ENCODE measurements at regions of chr22 and their contacts with region 1.

Region 1: GRCh38 chr22:31211862-31212730 is at the start of gene LIMK2:
- DNase-seq: peak; percentile 88
- H3K4me3 ChIP-seq: peak within 1 kb of the TSS; percentile 70 to 96 (median 92)
- H3K27ac ChIP-seq: peak within 1 kb of the TSS; percentile 61
- H3K4me1 ChIP-seq: peaks cover 14% of the 10 kb centered on the region
- H3K27me3 ChIP-seq: no peaks in the 10 kb centered on the region
- CTCF ChIP-seq: peak; percentile 57 to 83
- total RNA-seq, gene LIMK2: 176 to 484 TPM

Region 2: GRCh38 chr22:30763815-30764686 is 448.0 kb before region 1 on chr22:
- CTCF ChIA-PET with region 1: no interaction called
- dilution Hi-C with region 1: no loop called
- in situ Hi-C with region 1: no loop called
- intact Hi-C with region 1: no loop called
- DNase-seq: peak; percentile 83
- H3K4me3 ChIP-seq: no peak overlapping the region
- H3K27ac ChIP-seq: peak overlapping the region; percentile 6
- H3K4me1 ChIP-seq: peaks cover 3% of the 10 kb centered on the region
- H3K27me3 ChIP-seq: no peaks in the 10 kb centered on the region
- CTCF ChIP-seq: peak; percentile 59 to 77

Region 3: GRCh38 chr22:31107178-31107893 is 104.8 kb before region 1 on chr22 and contains the start of gene SELENOM:
- CTCF ChIA-PET with region 1: interaction called, 5 read pairs
- dilution Hi-C with region 1: no loop called
- in situ Hi-C with region 1: no loop called
- intact Hi-C with region 1: loop called (anchors 5 kb)
- DNase-seq: peak; percentile 98
- H3K4me3 ChIP-seq: peak within 1 kb of the TSS; percentile 66 to 77 (median 67)
- H3K27ac ChIP-seq: peak within 1 kb of the TSS; percentile 82
- H3K4me1 ChIP-seq: peaks cover 7% of the 10 kb centered on the region
- H3K27me3 ChIP-seq: no peaks in the 10 kb centered on the region
- CTCF ChIP-seq: peak; percentile 74 to 97
- total RNA-seq, gene SELENOM: 24.6 to 38.7 TPM

Region 4: DNA sequence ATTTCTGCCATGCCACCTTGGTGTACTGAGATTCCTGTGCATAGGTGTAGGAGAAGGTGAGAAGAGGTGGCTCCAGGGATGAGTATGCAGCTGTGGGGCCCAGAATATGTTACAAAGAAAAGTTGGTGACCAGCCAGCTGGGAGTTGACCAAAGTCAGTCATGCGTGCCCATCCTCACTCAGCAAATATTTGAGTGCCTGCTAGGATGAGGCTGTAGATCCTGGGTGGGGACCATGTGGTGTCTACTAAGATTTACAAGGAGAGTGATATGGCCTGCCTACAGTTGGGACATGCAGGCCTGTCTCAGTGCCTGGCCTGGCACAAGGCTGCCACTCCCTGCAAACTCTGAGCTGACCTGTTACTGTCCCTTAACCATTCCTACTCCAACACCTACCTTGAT is 32.7 kb before region 1 on chr22:
- CTCF ChIA-PET with region 1: no interaction called
- dilution Hi-C with region 1: no loop called
- in situ Hi-C with region 1: no loop called
- intact Hi-C with region 1: loop called (anchors 2 kb)
- DNase-seq: peak; percentile 67
- H3K4me3 ChIP-seq: no peak overlapping the region
- H3K27ac ChIP-seq: peak overlapping the region; percentile 1
- H3K4me1 ChIP-seq: peaks cover 35% of the 10 kb centered on the region
- H3K27me3 ChIP-seq: no peaks in the 10 kb centered on the region
- CTCF ChIP-seq: no peak

Region 5: DNA sequence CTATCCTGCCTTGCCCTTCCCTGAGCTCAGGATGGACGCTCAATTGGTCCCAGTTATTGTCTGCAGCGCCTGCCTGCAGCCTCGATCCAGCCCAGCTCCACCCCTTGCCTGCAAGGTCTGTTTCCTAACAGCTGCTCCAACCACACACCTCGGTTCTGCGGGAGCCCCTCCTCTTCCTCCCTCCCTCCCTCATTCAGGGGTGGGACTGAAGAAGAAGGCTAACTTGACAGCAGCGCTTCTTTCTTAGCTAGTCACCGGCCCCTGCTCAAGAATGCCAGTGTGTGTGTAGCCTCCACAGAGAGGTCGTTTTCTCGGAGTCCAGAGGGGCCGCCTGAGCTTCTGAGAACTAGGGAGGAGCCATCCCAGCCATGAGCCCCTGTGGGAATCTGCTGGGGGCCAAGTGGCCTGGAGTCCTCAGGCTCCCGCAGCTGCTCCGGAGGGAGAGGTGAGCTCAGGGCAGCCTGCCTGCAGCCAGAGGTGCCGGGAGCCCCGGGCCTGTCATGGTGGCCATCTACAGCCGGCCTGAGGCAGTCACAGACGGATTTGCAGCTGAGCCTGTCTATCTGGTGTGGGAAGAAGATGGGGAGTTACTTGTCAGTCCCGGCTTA is 36.1 kb after region 1 on chr22:
- CTCF ChIA-PET with region 1: interaction called, 4 read pairs
- dilution Hi-C with region 1: no loop called
- in situ Hi-C with region 1: no loop called
- intact Hi-C with region 1: loop called (anchors 1 kb)
- DNase-seq: peak; percentile 92
- H3K4me3 ChIP-seq: peak overlapping the region; percentile 70 to 94 (median 82)
- H3K27ac ChIP-seq: peak overlapping the region; percentile 86
- H3K4me1 ChIP-seq: peaks cover 55% of the 10 kb centered on the region
- H3K27me3 ChIP-seq: no peaks in the 10 kb centered on the region
- CTCF ChIP-seq: no peak

Region 6: DNA sequence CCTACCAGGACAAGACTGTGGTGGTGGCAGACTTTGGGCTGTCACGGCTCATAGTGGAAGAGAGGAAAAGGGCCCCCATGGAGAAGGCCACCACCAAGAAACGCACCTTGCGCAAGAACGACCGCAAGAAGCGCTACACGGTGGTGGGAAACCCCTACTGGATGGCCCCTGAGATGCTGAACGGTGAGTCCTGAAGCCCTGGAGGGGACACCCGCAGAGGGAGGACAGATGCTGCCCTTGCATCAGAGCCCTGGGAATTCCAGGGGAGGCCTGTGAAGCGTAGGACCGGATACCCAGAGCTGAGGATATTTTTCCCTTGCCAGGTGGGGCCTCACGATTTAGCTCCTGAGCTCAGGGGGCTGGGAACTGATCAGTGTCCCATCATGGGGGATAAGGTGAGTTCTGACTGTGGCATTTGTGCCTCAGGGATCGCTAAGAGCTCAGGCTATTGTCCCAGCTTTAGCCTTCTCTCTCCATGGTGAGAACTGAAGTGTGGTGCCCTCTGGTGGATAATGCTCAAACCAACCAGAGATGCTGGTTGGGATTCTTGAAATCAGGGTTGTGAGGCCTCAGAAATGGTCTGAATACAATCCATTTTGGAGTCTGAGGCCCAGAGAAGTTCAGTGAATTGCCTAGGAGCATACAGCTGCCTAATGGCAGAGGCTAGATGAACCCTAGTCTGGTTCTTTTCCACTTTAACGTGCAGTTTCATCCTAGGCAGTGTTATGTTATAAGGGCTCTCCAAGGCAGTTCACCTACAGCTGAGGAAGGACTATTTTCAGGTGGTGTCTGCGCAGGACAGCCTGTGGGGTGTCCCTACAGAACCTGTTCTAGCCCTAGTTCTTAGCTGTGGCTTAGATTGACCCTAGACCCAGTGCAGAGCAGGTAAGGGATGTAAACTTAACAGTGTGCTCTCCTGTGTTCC is 60.7 kb after region 1 on chr22:
- CTCF ChIA-PET with region 1: no interaction called
- dilution Hi-C with region 1: loop called (anchors 5 kb)
- in situ Hi-C with region 1: no loop called
- intact Hi-C with region 1: loop called (anchors 1 kb)
- DNase-seq: peak; percentile 47
- H3K4me3 ChIP-seq: no peak overlapping the region
- H3K27ac ChIP-seq: no peak overlapping the region
- H3K4me1 ChIP-seq: no peaks in the 10 kb centered on the region
- H3K27me3 ChIP-seq: no peaks in the 10 kb centered on the region
- CTCF ChIP-seq: peak; percentile 62 to 76

Region 7: DNA sequence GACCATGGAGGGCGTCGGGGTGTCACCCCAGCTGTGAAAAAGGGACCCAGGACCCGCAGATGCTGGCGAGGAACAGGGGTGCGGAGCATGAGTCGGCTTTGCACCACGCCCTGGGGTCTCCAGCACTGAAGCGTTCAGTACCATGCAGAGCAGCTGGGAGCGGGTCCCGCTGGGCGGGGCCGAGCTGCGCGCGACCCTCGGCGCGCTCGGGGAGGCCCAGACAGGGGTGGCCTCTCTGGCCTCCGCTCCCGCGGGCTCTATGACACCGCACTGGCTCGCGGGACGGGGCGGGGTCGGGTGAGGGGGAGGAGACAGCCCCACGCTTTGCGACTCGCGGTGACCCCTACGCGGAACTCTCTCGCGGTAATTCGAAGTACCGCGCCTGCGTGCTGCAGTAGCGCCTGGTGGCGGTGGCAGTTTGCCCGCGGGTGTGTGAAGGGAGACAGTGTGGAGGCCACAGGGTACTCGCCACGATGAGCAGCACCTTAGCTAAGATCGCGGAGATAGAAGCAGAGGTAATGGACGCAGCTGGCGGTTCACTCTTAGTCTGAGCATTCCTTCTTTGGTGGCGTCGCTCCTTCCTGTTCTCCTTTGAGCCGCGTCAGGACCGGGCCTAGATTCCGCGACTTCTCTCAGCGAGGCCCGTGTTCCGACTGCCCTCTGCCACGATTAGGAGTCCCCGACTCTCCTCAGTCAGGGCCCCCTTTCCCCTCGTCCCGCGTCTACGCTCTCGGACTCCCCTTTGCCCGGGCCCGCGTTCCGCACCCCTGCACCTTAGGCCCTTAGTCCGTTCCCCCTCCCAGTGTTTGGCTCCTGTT is 187.3 kb after region 1 on chr22 and contains the start of gene DRG1:
- CTCF ChIA-PET with region 1: no interaction called
- dilution Hi-C with region 1: no loop called
- in situ Hi-C with region 1: no loop called
- intact Hi-C with region 1: loop called (anchors 5 kb)
- DNase-seq: peak; percentile 92
- H3K4me3 ChIP-seq: peak within 1 kb of the TSS; percentile 74 to 86 (median 83)
- H3K27ac ChIP-seq: peak within 1 kb of the TSS; percentile 77
- H3K4me1 ChIP-seq: peaks cover 5% of the 10 kb centered on the region
- H3K27me3 ChIP-seq: no peaks in the 10 kb centered on the region
- CTCF ChIP-seq: no peak
- total RNA-seq, gene DRG1: 64.8 to 65.3 TPM